ENCODE measurements at regions of chr4 and their contacts with region 1.

Region 1: DNA sequence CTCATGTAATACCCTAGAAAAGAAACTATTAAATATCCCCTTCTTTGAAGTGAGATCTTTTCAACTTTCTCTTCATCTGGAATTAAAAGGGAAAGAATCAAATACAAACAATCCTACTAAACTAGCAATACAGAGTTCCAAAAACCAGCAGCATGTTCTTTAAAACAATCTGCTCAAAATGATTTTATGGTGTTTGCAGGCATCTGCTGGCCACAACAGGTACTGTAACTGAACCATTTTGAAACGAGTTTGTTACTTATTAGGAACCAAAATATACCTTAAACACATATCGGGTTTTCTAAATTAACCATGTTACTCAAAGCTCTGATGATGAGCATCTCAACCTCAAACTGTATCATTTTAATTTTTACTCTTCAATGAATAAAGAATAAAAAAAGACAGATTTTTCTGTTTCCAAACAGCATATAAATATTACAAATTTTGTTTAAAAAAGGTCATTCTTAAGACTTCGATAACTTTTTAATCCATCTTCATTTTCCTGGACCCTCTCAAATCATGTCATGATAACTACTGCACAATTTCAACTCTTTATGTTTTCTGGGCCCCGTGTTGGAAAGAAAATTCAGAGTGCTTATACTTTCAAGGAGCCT is 56.5 kb downstream of the ARAP2 start:
- DNase-seq: no peak
- ATAC-seq: no peak
- H3K4me3 ChIP-seq: no peak overlapping the region
- H3K4me3 Mint-ChIP-seq: no peak overlapping the region
- H3K27ac ChIP-seq: no peak overlapping the region
- H3K27ac Mint-ChIP-seq: no peak overlapping the region
- H3K4me1 ChIP-seq: peaks cover 10 to 16% of the 10 kb centered on the region in 2 donors
- H3K4me1 Mint-ChIP-seq: peaks cover 23% of the 10 kb centered on the region
- H3K27me3 ChIP-seq: no peaks in the 10 kb centered on the region
- H3K27me3 Mint-ChIP-seq: no peaks in the 10 kb centered on the region
- CTCF ChIP-seq: peak; percentile 63

Region 2: GRCh38 chr4:35802644-35803043 is 385.2 kb before region 1 on chr4:
- CTCF ChIA-PET with region 1: no interaction called
- POLR2A ChIA-PET with region 1: no interaction called
- intact Hi-C with region 1: no loop called
- DNase-seq: no peak
- ATAC-seq: no peak
- H3K4me3 ChIP-seq: no peak overlapping the region
- H3K4me3 Mint-ChIP-seq: no peak overlapping the region
- H3K27ac ChIP-seq: no peak overlapping the region
- H3K27ac Mint-ChIP-seq: no peak overlapping the region
- H3K4me1 ChIP-seq: no peaks in the 10 kb centered on the region
- H3K4me1 Mint-ChIP-seq: no peaks in the 10 kb centered on the region
- H3K27me3 ChIP-seq: no peaks in the 10 kb centered on the region
- H3K27me3 Mint-ChIP-seq: no peaks in the 10 kb centered on the region
- CTCF ChIP-seq: no peak

Region 3: DNA sequence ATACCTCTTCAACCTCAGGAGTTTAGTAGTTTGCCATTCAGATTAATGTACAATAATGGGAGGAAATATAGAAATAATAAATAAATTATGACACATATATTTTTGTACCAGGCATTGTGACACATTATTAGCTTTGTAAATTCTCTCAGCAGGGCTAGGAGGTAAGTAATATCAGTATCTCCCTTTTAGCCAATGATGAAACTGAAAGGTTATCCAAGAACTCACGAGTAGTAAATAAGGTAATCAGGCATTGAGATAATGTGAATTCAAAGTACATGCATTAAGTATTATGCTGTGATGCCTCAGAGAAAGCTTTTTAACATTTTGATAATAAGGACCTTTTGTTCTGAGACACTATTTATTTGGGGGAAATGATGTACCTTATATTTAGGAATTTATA is 61.8 kb after region 1 on chr4:
- CTCF ChIA-PET with region 1: interaction called, 3 read pairs
- POLR2A ChIA-PET with region 1: interaction called, 15 read pairs
- intact Hi-C with region 1: no loop called
- DNase-seq: no peak
- ATAC-seq: no peak
- H3K4me3 ChIP-seq: no peak overlapping the region
- H3K4me3 Mint-ChIP-seq: no peak overlapping the region
- H3K27ac ChIP-seq: no peak overlapping the region
- H3K27ac Mint-ChIP-seq: no peak overlapping the region
- H3K4me1 ChIP-seq: peaks cover 12 to 16% of the 10 kb centered on the region in 2 donors
- H3K4me1 Mint-ChIP-seq: peaks cover 22% of the 10 kb centered on the region
- H3K27me3 ChIP-seq: no peaks in the 10 kb centered on the region
- H3K27me3 Mint-ChIP-seq: no peaks in the 10 kb centered on the region
- CTCF ChIP-seq: no peak

Region 4: GRCh38 chr4:36508394-36508793 is 320.6 kb after region 1 on chr4:
- CTCF ChIA-PET with region 1: no interaction called
- POLR2A ChIA-PET with region 1: no interaction called
- intact Hi-C with region 1: no loop called
- DNase-seq: no peak
- ATAC-seq: no peak
- H3K4me3 ChIP-seq: no peak overlapping the region
- H3K4me3 Mint-ChIP-seq: no peak overlapping the region
- H3K27ac ChIP-seq: no peak overlapping the region
- H3K27ac Mint-ChIP-seq: no peak overlapping the region
- H3K4me1 ChIP-seq: no peaks in the 10 kb centered on the region
- H3K4me1 Mint-ChIP-seq: no peaks in the 10 kb centered on the region
- H3K27me3 ChIP-seq: no peaks in the 10 kb centered on the region
- H3K27me3 Mint-ChIP-seq: no peaks in the 10 kb centered on the region
- CTCF ChIP-seq: no peak

Region 5: GRCh38 chr4:36582198-36582597 is 394.4 kb after region 1 on chr4:
- CTCF ChIA-PET with region 1: no interaction called
- POLR2A ChIA-PET with region 1: no interaction called
- intact Hi-C with region 1: no loop called
- DNase-seq: no peak
- ATAC-seq: no peak
- H3K4me3 ChIP-seq: no peak overlapping the region
- H3K4me3 Mint-ChIP-seq: no peak overlapping the region
- H3K27ac ChIP-seq: no peak overlapping the region
- H3K27ac Mint-ChIP-seq: no peak overlapping the region
- H3K4me1 ChIP-seq: no peaks in the 10 kb centered on the region
- H3K4me1 Mint-ChIP-seq: no peaks in the 10 kb centered on the region
- H3K27me3 ChIP-seq: no peaks in the 10 kb centered on the region
- H3K27me3 Mint-ChIP-seq: no peaks in the 10 kb centered on the region
- CTCF ChIP-seq: no peak